Heart right ventricle (tissue), 16 donors: ENCODE measurements at regions of chr11 and their contacts with region 1.

Region 1: DNA sequence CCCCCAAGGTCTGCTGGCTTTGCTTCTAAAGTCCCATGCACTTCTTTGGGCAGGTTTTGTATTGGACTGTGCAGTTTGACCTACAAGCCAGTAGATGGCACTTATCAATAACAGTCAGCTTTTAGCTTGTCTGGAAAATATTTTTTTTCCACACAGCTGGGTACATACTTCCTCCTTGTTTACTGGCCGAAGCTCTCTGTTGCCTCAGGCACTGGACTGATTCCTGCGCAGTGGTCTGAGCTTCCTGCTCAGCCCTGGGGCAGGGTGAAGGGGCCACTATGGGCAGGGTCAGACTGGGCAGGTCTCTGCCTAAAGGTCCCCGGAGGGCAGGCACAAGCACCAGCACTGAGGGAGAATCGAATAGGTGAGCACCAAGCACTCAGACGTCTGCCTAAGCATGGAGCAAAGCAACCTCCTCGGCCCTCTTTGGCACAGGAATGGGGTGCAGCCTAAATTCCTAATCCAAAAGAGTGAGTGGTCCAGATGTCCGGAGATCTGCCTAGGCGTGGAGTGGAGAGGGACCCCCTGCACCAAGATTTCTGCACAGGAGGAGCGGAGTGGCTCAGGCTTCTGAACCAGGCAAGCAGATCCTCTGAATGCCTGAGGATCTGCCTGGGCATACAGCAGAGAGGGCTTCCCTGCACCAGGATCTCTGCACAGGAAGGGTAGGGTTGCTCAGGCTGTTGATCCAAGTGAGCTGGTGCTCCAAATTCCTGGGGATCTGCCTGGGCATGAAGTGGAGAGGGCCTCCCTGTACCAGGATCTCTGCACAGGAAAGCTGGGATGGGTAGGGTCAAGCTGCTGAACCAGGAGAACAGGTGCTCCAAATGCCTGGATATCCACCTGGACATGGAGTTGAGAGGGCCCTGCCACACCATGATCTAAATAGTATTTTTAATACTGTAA is 105.9 kb upstream of the C11orf58 start:
- DNase-seq: no peak
- ATAC-seq: peak in 1 of 8 donors; percentile 20
- H3K4me3 ChIP-seq: no peak overlapping the region
- H3K27ac ChIP-seq: no peak overlapping the region
- H3K4me1 ChIP-seq: no peaks in the 10 kb centered on the region
- H3K27me3 ChIP-seq: peaks cover 0 to 2% (median 0%) of the 10 kb centered on the region in 7 donors
- CTCF ChIP-seq: peak in 7 of 9 donors; percentile 20 to 40 (median 29)

Region 2: DNA sequence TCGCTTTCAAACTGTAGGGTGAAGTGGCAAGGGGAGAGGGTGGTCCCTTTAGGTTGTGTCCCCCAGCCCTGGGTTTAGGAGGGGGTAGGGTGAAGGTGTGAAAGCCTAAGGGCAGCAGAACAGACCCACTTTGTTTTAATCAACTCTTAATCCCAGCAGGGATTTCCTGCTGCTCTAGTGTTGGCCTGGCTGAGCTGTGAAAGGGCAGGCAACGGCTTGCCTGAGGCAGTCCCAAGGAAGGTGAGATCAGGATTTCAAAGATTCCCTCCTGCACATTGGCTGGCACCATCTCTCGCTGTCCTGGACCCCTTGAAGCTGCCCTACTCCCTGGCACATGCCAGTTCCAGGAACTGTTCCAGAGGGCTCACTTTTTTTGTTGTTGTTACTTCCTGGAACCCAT is 1296.5 kb before region 1 on chr11:
- intact Hi-C with region 1: loop called in 1 of 10 experiments (anchors 10 kb)
- DNase-seq: no peak
- ATAC-seq: no peak
- H3K4me3 ChIP-seq: no peak overlapping the region
- H3K27ac ChIP-seq: no peak overlapping the region
- H3K4me1 ChIP-seq: no peaks in the 10 kb centered on the region
- H3K27me3 ChIP-seq: peaks cover 0 to 4% (median 0%) of the 10 kb centered on the region in 7 donors
- CTCF ChIP-seq: no peak

Region 3: DNA sequence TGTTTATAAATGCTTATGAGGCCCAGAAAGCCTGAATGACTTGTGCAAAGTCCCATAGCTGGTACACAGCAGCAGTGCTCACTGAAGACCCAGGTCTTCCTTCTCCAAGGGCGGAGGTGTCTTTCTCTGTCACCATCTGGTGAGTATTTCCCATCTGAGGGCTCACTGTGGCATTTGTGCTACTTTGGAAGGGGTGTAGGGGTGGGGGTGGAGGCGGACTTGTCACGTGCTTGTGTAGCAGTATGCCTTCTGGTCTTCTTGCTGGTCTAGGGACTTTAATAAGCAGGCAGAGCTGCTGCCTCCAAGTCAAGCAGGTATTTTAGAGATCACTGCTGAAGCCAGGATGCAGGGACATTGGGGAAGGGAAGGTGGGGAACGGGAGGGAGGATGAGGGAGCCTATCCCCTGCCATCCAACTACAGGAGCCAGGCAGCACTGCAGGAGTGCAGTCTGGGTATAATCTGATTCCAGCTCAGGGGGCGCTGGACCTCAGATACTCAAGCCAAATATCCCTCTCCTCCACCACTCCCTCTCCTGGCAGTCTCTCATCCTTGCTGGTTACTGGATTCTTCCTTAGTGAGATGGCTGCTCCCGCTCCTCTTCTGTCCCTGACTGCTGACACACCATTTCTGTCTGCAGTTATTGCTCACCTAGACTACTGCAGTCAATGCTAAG is 840.7 kb after region 1 on chr11:
- intact Hi-C with region 1: no loop called
- DNase-seq: no peak
- ATAC-seq: no peak
- H3K4me3 ChIP-seq: no peak overlapping the region
- H3K27ac ChIP-seq: no peak overlapping the region
- H3K4me1 ChIP-seq: peaks cover 0 to 7% (median 0%) of the 10 kb centered on the region in 9 donors
- H3K27me3 ChIP-seq: peaks cover 0 to 59% (median 45%) of the 10 kb centered on the region in 7 donors
- CTCF ChIP-seq: no peak